H1 (cell line): ENCODE measurements at regions of chr3 and their contacts with region 1.

Region 1: GRCh38 chr3:65732051-65732935 is 306.4 kb downstream of the MAGI1 start:
- DNase-seq: no peak
- H3K4me3 ChIP-seq: no peak overlapping the region
- H3K27ac ChIP-seq: no peak overlapping the region
- H3K4me1 ChIP-seq: peaks cover 0 to 12% (median 2%) of the 10 kb centered on the region in 4 experiments; a peak in 5 of 7 replicates
- H3K27me3 ChIP-seq: no peaks in the 10 kb centered on the region
- CTCF ChIP-seq: peak in 2 of 3 experiments; percentile 62 to 84; a peak in 3 of 4 replicates
- EP300 ChIP-seq: no peak
- POLR2A ChIP-seq: no peak
- RAD21 ChIP-seq: peak; percentile 80 to 81

Region 2: DNA sequence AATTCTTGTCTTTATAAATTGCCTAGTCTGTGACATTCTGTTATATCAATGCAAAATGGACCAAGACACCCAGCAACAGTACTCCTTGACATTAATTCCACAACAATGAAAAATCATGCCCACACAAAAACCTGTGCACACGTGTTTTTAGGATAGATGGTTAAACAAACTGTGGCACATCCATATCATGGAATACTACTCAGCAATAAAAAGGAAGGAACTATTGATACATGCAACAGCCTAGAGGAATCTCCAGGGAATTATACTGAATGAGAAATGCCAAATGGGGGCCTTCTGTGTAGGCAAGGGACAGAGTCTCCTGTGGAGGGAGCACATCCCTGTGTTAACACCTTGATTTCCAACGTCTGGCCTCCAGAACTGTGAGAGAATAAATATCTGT is 82.0 kb before region 1 on chr3:
- CTCF ChIA-PET with region 1: no interaction called
- POLR2A ChIA-PET with region 1: no interaction called
- DNase-seq: no peak
- H3K4me3 ChIP-seq: no peak overlapping the region
- H3K27ac ChIP-seq: no peak overlapping the region
- H3K4me1 ChIP-seq: peaks cover 0 to 5% (median 0%) of the 10 kb centered on the region in 4 experiments; a peak in 1 of 7 replicates
- H3K27me3 ChIP-seq: no peaks in the 10 kb centered on the region
- CTCF ChIP-seq: no peak
- EP300 ChIP-seq: no peak
- POLR2A ChIP-seq: no peak
- RAD21 ChIP-seq: no peak

Region 3: GRCh38 chr3:65761446-65762234 is 29.3 kb after region 1 on chr3:
- CTCF ChIA-PET with region 1: interaction called, 10 read pairs
- POLR2A ChIA-PET with region 1: no interaction called
- DNase-seq: no peak
- H3K4me3 ChIP-seq: peak overlapping the region in 1 of 4 experiments; percentile 32; a peak in 2 of 8 replicates
- H3K27ac ChIP-seq: no peak overlapping the region
- H3K4me1 ChIP-seq: peaks cover 0 to 14% (median 10%) of the 10 kb centered on the region in 4 experiments; a peak in 5 of 7 replicates
- H3K27me3 ChIP-seq: peaks cover 0 to 1% (median 0%) of the 10 kb centered on the region in 4 experiments; a peak in 1 of 7 replicates
- CTCF ChIP-seq: no peak
- EP300 ChIP-seq: no peak
- POLR2A ChIP-seq: no peak
- RAD21 ChIP-seq: no peak

Region 4: GRCh38 chr3:65785065-65785645 is 52.9 kb after region 1 on chr3:
- CTCF ChIA-PET with region 1: no interaction called
- POLR2A ChIA-PET with region 1: no interaction called
- DNase-seq: no peak
- H3K4me3 ChIP-seq: no peak overlapping the region
- H3K27ac ChIP-seq: no peak overlapping the region
- H3K4me1 ChIP-seq: peaks cover 0 to 2% (median 0%) of the 10 kb centered on the region in 4 experiments; a peak in 1 of 7 replicates
- H3K27me3 ChIP-seq: no peaks in the 10 kb centered on the region
- CTCF ChIP-seq: peak in 2 of 3 experiments; percentile 31 to 57; a peak in 2 of 4 replicates
- EP300 ChIP-seq: no peak
- POLR2A ChIP-seq: no peak
- RAD21 ChIP-seq: peak; percentile 82 to 88

Region 5: GRCh38 chr3:65811086-65811761 is 78.9 kb after region 1 on chr3:
- CTCF ChIA-PET with region 1: no interaction called
- POLR2A ChIA-PET with region 1: no interaction called
- DNase-seq: no peak
- H3K4me3 ChIP-seq: no peak overlapping the region
- H3K27ac ChIP-seq: no peak overlapping the region
- H3K4me1 ChIP-seq: peaks cover 0 to 11% (median 7%) of the 10 kb centered on the region in 4 experiments; a peak in 2 of 7 replicates
- H3K27me3 ChIP-seq: no peaks in the 10 kb centered on the region
- CTCF ChIP-seq: no peak
- EP300 ChIP-seq: no peak
- POLR2A ChIP-seq: no peak
- RAD21 ChIP-seq: no peak